ENCODE measurements at regions of chr6 and their contacts with region 1.

Region 1: DNA sequence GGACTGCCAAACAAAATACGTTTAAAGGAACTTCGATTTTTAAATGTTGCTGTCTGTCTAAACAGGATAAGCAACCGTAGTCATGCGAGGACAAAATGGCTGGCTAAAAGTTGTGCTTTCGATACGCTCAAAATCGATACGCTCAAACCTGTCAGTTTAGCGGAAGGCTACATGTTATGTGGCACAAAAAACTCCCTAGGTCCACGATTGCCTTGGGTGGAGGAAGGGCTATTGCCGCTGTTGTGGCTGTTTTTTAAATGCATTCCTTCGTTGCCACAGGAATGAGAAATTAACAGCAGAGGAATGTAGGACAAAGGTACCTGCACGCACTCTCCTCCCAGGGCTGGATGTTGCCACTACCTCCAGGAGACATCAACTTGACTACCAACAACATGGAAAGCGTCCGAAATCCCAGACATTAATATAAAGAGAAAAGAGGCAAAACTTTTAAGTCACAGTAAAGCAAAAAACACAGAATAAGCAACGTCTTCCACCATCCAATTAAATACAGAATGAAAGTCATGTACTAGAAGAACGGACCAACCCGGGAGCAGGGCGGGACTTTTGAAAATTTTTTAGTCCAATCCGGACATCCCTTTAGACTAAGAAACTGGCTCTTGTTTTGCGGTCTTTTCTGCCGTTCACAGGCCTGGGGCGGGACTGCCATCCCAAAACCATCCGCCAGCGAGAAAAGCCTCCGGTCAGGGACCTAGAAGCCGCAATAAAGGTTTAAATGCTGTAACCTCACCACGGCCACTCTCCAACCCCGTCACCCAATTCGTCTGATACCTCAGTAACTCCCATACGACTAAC is 32.2 kb upstream of the HFE start:
- DNase-seq: peak; percentile 81 to 95 (median 88)
- ATAC-seq: peak; percentile 68
- H3K4me3 ChIP-seq: peak overlapping the region; percentile 60
- H3K27ac ChIP-seq: peak overlapping the region; percentile 94
- H3K4me1 ChIP-seq: peaks cover 7 to 29% of the 10 kb centered on the region in 2 experiments
- H3K27me3 ChIP-seq: no peaks in the 10 kb centered on the region
- CTCF ChIP-seq: peak; percentile 24 to 42 (median 29); a peak in 3 of 6 replicates
- EP300 ChIP-seq: peak; percentile 34
- POLR2A ChIP-seq: peak; percentile 95
- RAD21 ChIP-seq: peak in 1 of 2 experiments; percentile 59; a peak in 2 of 4 replicates

Region 2: GRCh38 chr6:25874822-25875562 is 180.1 kb before region 1 on chr6:
- CTCF ChIA-PET with region 1: no interaction called
- POLR2A ChIA-PET with region 1: no interaction called
- in situ Hi-C with region 1: no loop called
- intact Hi-C with region 1: no loop called
- DNase-seq: no peak
- ATAC-seq: peak; percentile 55; the same call in 2 of the 3 replicates
- H3K4me3 ChIP-seq: no peak overlapping the region
- H3K27ac ChIP-seq: peak overlapping the region; percentile 1; the same call in 1 of the 3 replicates
- H3K4me1 ChIP-seq: no peaks in the 10 kb centered on the region; a peak in 2 of 5 replicates
- H3K27me3 ChIP-seq: no peaks in the 10 kb centered on the region
- CTCF ChIP-seq: no peak
- EP300 ChIP-seq: no peak
- POLR2A ChIP-seq: no peak
- RAD21 ChIP-seq: no peak

Region 3: DNA sequence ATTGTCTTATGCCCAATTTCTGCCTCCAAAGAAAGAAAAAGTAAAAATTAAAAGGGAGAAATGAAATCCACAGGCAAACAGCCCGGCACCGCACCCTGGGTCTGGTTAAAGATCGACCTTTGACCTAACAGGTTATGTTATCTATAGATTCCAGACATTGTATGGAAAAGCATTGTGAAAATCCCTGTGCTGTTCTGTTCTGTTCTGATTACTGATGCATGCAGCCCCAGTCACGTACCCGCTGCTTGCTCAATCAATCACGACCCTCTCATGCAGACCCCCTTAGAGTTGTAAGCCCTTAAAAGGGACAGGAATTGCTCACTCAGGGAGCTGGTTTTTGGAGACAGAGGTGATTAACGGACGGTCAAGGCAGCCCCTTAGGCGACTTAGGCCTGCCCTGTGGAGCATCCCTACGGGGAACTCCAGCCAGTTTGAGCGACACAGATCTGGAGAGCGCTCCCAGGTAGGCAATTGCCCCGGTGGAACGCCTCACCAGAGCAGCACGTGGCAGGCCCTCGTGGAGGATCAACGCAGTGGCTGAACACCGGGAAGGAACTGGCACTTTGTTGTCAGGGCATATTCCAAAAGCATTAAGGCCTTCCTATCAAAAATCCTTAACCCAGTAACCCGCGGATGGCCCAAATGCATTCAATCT is 20.1 kb after region 1 on chr6:
- CTCF ChIA-PET with region 1: no interaction called
- POLR2A ChIA-PET with region 1: no interaction called
- in situ Hi-C with region 1: no loop called
- intact Hi-C with region 1: no loop called
- DNase-seq: peak in 1 of 4 experiments; percentile 44
- ATAC-seq: peak; percentile 22
- H3K4me3 ChIP-seq: no peak overlapping the region
- H3K27ac ChIP-seq: no peak overlapping the region
- H3K4me1 ChIP-seq: peaks cover 10 to 17% of the 10 kb centered on the region in 2 experiments
- H3K27me3 ChIP-seq: no peaks in the 10 kb centered on the region
- CTCF ChIP-seq: no peak
- EP300 ChIP-seq: peak; percentile 45
- POLR2A ChIP-seq: no peak
- RAD21 ChIP-seq: no peak

Region 4: GRCh38 chr6:26170951-26171841 is 116.1 kb after region 1 on chr6:
- CTCF ChIA-PET with region 1: no interaction called
- POLR2A ChIA-PET with region 1: no interaction called
- in situ Hi-C with region 1: no loop called
- intact Hi-C with region 1: no loop called
- DNase-seq: no peak
- ATAC-seq: no peak
- H3K4me3 ChIP-seq: peak overlapping the region; percentile 47
- H3K27ac ChIP-seq: peak overlapping the region; percentile 79
- H3K4me1 ChIP-seq: peaks cover 14 to 39% of the 10 kb centered on the region in 2 experiments
- H3K27me3 ChIP-seq: no peaks in the 10 kb centered on the region
- CTCF ChIP-seq: no peak
- EP300 ChIP-seq: no peak
- POLR2A ChIP-seq: no peak
- RAD21 ChIP-seq: no peak; a peak in 1 of 4 replicates

Region 5: GRCh38 chr6:26204332-26205165 is 149.5 kb after region 1 on chr6:
- CTCF ChIA-PET with region 1: no interaction called
- POLR2A ChIA-PET with region 1: interaction called, 23 read pairs
- in situ Hi-C with region 1: no loop called
- intact Hi-C with region 1: loop called (anchors 1 kb)
- DNase-seq: peak; percentile 85 to 99 (median 92)
- ATAC-seq: peak; percentile 67
- H3K4me3 ChIP-seq: peak overlapping the region; percentile 57
- H3K27ac ChIP-seq: peak overlapping the region; percentile 99
- H3K4me1 ChIP-seq: peaks cover 9 to 21% of the 10 kb centered on the region in 2 experiments; a peak in 4 of 5 replicates
- H3K27me3 ChIP-seq: no peaks in the 10 kb centered on the region
- CTCF ChIP-seq: peak in 2 of 3 experiments; percentile 67 to 70; a peak in 5 of 6 replicates
- EP300 ChIP-seq: peak; percentile 95
- POLR2A ChIP-seq: peak; percentile 100
- RAD21 ChIP-seq: peak in 1 of 2 experiments; percentile 29; a peak in 2 of 4 replicates